A673 (cell line): ENCODE measurements at regions of chr2 and their contacts with region 1.

Region 1: DNA sequence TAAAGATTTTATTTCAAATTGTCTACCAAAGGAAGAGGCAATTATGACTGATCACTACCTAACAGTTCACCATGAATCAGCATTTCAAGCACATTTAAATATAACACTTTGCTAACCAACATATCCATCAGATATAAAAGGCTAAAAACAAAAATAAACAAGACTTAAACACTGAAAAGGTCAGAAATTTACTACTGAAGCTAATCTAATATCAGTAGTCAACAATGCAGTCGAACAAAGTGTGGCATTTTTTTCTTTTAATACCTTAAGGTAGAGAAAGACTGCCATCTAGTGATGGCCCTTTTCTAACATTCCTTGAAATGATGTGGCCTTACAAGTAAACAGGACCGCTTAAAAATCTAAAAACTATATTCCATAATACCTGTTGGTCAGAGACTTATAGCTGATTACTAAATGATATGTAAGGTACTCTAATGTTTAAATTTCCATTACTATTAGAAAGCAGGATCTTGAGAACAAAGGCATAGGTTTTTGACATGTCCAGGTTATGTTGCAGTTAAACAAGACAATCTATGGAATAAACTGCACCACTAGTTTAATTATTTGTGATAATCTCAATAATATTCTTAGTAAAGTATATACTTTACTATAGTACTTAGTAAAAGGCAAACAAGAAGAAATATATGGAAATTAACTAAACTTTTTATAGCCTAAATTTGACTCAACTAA is 80.0 kb downstream of the EXOC6B start:
- DNase-seq: peak; percentile 82
- H3K4me3 ChIP-seq: no peak overlapping the region
- H3K27ac ChIP-seq: no peak overlapping the region
- H3K4me1 ChIP-seq: peaks cover 17% of the 10 kb centered on the region
- H3K27me3 ChIP-seq: no peaks in the 10 kb centered on the region
- CTCF ChIP-seq: peak; percentile 83

Region 2: GRCh38 chr2:71545572-71546274 is 1200.1 kb before region 1 on chr2:
- CTCF ChIA-PET with region 1: interaction called, 11 read pairs
- POLR2A ChIA-PET with region 1: no interaction called
- intact Hi-C with region 1: loop called (anchors 5 kb)
- DNase-seq: peak; percentile 80
- H3K4me3 ChIP-seq: peak overlapping the region; percentile 25
- H3K27ac ChIP-seq: no peak overlapping the region
- H3K4me1 ChIP-seq: peaks cover 4% of the 10 kb centered on the region
- H3K27me3 ChIP-seq: no peaks in the 10 kb centered on the region
- CTCF ChIP-seq: peak; percentile 84

Region 3: GRCh38 chr2:71798266-71799012 is 947.4 kb before region 1 on chr2:
- CTCF ChIA-PET with region 1: no interaction called
- POLR2A ChIA-PET with region 1: no interaction called
- intact Hi-C with region 1: loop called (anchors 10 kb)
- DNase-seq: peak; percentile 34
- H3K4me3 ChIP-seq: no peak overlapping the region
- H3K27ac ChIP-seq: no peak overlapping the region
- H3K4me1 ChIP-seq: no peaks in the 10 kb centered on the region
- H3K27me3 ChIP-seq: no peaks in the 10 kb centered on the region
- CTCF ChIP-seq: peak; percentile 87

Region 4: GRCh38 chr2:72150157-72150865 is 595.5 kb before region 1 on chr2:
- CTCF ChIA-PET with region 1: no interaction called
- POLR2A ChIA-PET with region 1: no interaction called
- intact Hi-C with region 1: loop called (anchors 10 kb)
- DNase-seq: peak; percentile 86
- H3K4me3 ChIP-seq: peak overlapping the region; percentile 60
- H3K27ac ChIP-seq: no peak overlapping the region
- H3K4me1 ChIP-seq: peaks cover 23% of the 10 kb centered on the region
- H3K27me3 ChIP-seq: peaks cover 35% of the 10 kb centered on the region
- CTCF ChIP-seq: peak; percentile 78

Region 5: DNA sequence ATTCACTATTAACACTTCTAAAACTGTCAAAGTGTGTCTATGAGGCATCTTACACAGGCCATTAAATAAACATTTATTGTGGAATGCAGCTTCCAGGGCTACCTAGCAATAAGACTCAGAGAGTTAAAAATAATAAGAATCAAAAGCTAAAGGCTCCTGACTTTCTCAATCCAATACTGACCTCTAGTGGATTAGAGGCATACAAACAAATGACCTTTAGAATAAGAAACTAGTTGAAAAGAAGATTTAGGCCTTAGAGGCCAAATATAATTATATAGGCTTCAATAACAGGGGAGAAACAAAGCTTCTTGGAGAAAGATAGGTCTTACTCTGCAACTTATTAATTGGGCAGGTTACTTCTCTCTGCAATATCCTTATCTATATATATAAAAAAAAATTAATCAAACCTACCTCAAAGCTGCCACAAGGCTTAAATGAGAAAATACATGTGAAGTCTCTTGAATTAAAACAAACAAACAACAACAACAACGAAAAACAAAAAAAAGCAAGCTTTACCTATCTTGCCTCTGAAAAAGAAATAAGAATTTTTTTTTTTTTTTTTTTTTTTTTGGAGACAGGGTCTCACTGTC is 166.1 kb before region 1 on chr2:
- CTCF ChIA-PET with region 1: no interaction called
- POLR2A ChIA-PET with region 1: no interaction called
- intact Hi-C with region 1: loop called (anchors 5 kb)
- DNase-seq: peak; percentile 81
- H3K4me3 ChIP-seq: no peak overlapping the region
- H3K27ac ChIP-seq: peak overlapping the region; percentile 10
- H3K4me1 ChIP-seq: peaks cover 48% of the 10 kb centered on the region
- H3K27me3 ChIP-seq: no peaks in the 10 kb centered on the region
- CTCF ChIP-seq: peak; percentile 73